CD14-positive monocyte (primary cell): ENCODE measurements at regions of chr3 and their contacts with region 1.

Region 1: GRCh38 chr3:128432971-128433704 is 33.6 kb downstream of the DNAJB8 start:
- DNase-seq: no peak
- H3K4me3 ChIP-seq: no peak overlapping the region
- H3K4me3 Mint-ChIP-seq: peak overlapping the region in 1 of 2 donors; percentile 74
- H3K27ac ChIP-seq: no peak overlapping the region
- H3K27ac Mint-ChIP-seq: no peak overlapping the region
- H3K4me1 ChIP-seq: peaks cover 0 to 8% of the 10 kb centered on the region in 2 donors
- H3K4me1 Mint-ChIP-seq: peaks cover 6% of the 10 kb centered on the region
- H3K27me3 ChIP-seq: peaks cover 17 to 52% of the 10 kb centered on the region in 2 donors
- H3K27me3 Mint-ChIP-seq: peaks cover 42 to 70% (median 46%) of the 10 kb centered on the region in 3 donors
- CTCF ChIP-seq: no peak

Region 2: GRCh38 chr3:128487813-128488635 is 54.9 kb after region 1 on chr3:
- intact Hi-C with region 1: loop called in 1 of 2 experiments (anchors 5 kb)
- DNase-seq: peak; percentile 35 to 62 (median 46)
- H3K4me3 ChIP-seq: peak overlapping the region in 2 of 3 experiments; percentile 51 to 78
- H3K4me3 Mint-ChIP-seq: peak overlapping the region; percentile 85 to 97
- H3K27ac ChIP-seq: no peak overlapping the region
- H3K27ac Mint-ChIP-seq: peak overlapping the region in 1 of 7 donors; percentile 69
- H3K4me1 ChIP-seq: peaks cover 57 to 69% of the 10 kb centered on the region in 2 donors
- H3K4me1 Mint-ChIP-seq: peaks cover 55% of the 10 kb centered on the region
- H3K27me3 ChIP-seq: peaks cover 85 to 99% of the 10 kb centered on the region in 2 donors
- H3K27me3 Mint-ChIP-seq: peaks cover 87 to 100% (median 96%) of the 10 kb centered on the region in 3 donors
- CTCF ChIP-seq: no peak